PC-3 (cell line): ENCODE measurements at regions of chr15 and their contacts with region 1.

Region 1: DNA sequence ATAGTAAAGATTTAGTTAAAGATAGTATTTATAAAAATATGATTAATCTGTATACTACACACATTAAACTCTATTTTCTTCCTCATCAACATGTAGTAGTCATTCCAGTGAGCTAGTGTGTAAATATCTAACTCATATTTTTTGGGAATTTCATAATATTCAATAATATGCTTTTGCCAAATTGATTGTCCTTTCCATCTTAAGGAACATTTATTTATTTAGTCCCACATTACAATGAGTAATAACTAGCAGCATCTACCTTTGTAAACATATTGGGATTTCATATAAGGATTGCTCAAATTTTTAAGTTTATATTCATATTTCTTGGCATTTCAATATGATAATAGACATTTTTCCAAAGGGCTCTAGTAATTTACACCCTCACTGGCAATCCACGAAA is 53.9 kb upstream of the GOLGA8B start:
- DNase-seq: peak; percentile 51
- ATAC-seq: peak; percentile 76
- H3K4me3 ChIP-seq: no peak overlapping the region
- H3K27ac ChIP-seq: no peak overlapping the region
- H3K4me1 ChIP-seq: peaks cover 4% of the 10 kb centered on the region; the same call in 1 of the 2 replicates
- H3K27me3 ChIP-seq: no peaks in the 10 kb centered on the region
- CTCF ChIP-seq: no peak

Region 2: GRCh38 chr15:34810455-34811146 is 173.3 kb after region 1 on chr15:
- CTCF ChIA-PET with region 1: no interaction called
- POLR2A ChIA-PET with region 1: interaction called, 12 read pairs
- intact Hi-C with region 1: no loop called
- DNase-seq: peak; percentile 64
- ATAC-seq: peak; percentile 76
- H3K4me3 ChIP-seq: no peak overlapping the region
- H3K27ac ChIP-seq: peak overlapping the region; percentile 47
- H3K4me1 ChIP-seq: peaks cover 12% of the 10 kb centered on the region; the same call in 1 of the 2 replicates
- H3K27me3 ChIP-seq: 0 out of 2 replicates have a peak, but pooled peaks cover 3% of the 10 kb centered on the region
- CTCF ChIP-seq: no peak